Activated B cell treated with CpG ODN at 0.5 μM for 24 hours (primary cell): ENCODE measurements at regions of chr1 and their contacts with region 1.

Region 1: GRCh38 chr1:246931549-246932365 is at the start of gene AHCTF1:
- DNase-seq: peak; percentile 87
- ATAC-seq: peak; percentile 88
- H3K4me3 Mint-ChIP-seq: peak within 1 kb of the TSS; percentile 92
- H3K27ac Mint-ChIP-seq: peak within 1 kb of the TSS; percentile 96
- H3K4me1 Mint-ChIP-seq: peaks cover 29% of the 10 kb centered on the region
- H3K27me3 Mint-ChIP-seq: no peaks in the 10 kb centered on the region
- CTCF ChIP-seq: no peak
- total RNA-seq, gene AHCTF1: 25.3 and 31.3 TPM in 2 replicates

Region 2: DNA sequence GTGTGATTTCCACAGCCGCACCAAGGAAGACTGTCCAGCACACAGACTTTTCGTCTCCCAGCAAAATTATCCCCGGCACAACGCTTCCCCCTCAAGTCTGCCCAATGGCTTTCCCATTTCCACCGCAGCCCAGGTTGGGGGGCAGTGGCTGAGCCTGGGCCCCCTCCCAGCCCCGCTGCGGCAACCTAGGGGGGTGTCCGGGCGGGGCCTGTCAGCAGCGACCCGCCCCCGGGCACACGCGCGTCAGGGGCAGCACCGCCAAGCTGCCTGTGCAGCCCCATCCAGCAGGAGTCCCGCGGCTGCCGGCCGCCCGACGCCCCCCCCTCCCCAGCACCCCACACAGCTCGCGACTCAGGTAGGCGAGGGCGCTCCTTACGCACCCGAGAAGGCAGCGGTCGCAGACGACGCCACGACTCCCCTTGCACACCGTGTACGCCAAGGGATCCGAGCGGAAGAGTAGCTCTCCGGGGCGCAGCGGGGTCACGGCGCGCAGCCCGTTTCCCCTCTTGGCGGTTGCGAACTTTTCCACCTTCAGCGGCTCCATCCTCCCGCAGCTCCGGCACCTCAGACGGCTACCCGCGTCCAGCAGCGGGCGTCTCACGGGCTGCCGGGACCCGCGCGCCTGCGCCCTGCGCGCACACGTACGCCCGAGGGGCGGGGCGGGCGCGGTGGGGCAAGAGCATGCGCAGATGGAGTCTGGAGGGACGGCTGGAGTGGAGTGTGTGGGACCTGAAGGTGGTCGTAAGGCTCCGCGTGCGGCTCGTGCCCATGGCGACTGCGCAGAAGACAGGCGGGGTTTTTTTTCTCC is 424.9 kb before region 1 on chr1 and contains the start of gene SMYD3:
- CTCF ChIA-PET with region 1: no interaction called
- POLR2A ChIA-PET with region 1: no interaction called
- intact Hi-C with region 1: no loop called
- DNase-seq: peak; percentile 67
- ATAC-seq: peak; percentile 93
- H3K4me3 Mint-ChIP-seq: peak within 1 kb of the TSS; percentile 93
- H3K27ac Mint-ChIP-seq: peak within 1 kb of the TSS; percentile 86
- H3K4me1 Mint-ChIP-seq: peaks cover 22% of the 10 kb centered on the region
- H3K27me3 Mint-ChIP-seq: no peaks in the 10 kb centered on the region
- CTCF ChIP-seq: no peak
- total RNA-seq, gene SMYD3: 18.3 and 20.8 TPM in 2 replicates

Region 3: GRCh38 chr1:246617768-246618167 is 314.0 kb before region 1 on chr1:
- CTCF ChIA-PET with region 1: no interaction called
- POLR2A ChIA-PET with region 1: no interaction called
- intact Hi-C with region 1: no loop called
- DNase-seq: no peak
- ATAC-seq: no peak
- H3K4me3 Mint-ChIP-seq: no peak overlapping the region
- H3K27ac Mint-ChIP-seq: no peak overlapping the region
- H3K4me1 Mint-ChIP-seq: peaks cover 5% of the 10 kb centered on the region
- H3K27me3 Mint-ChIP-seq: no peaks in the 10 kb centered on the region
- CTCF ChIP-seq: no peak

Region 4: GRCh38 chr1:246959944-246960693 is 28.4 kb after region 1 on chr1:
- CTCF ChIA-PET with region 1: no interaction called
- POLR2A ChIA-PET with region 1: interaction called, 15 read pairs
- intact Hi-C with region 1: loop called (anchors 1 kb)
- DNase-seq: no peak
- ATAC-seq: peak; percentile 56
- H3K4me3 Mint-ChIP-seq: peak overlapping the region; percentile 50
- H3K27ac Mint-ChIP-seq: peak overlapping the region; percentile 62
- H3K4me1 Mint-ChIP-seq: peaks cover 36% of the 10 kb centered on the region
- H3K27me3 Mint-ChIP-seq: no peaks in the 10 kb centered on the region
- CTCF ChIP-seq: no peak

Region 5: GRCh38 chr1:247007511-247008405 is 76.0 kb after region 1 on chr1 and contains the start of gene ZNF695:
- CTCF ChIA-PET with region 1: no interaction called
- POLR2A ChIA-PET with region 1: interaction called, 3 read pairs
- intact Hi-C with region 1: loop called (anchors 1 kb)
- DNase-seq: peak; percentile 56
- ATAC-seq: peak; percentile 100
- H3K4me3 Mint-ChIP-seq: peak within 1 kb of the TSS; percentile 92
- H3K27ac Mint-ChIP-seq: peak within 1 kb of the TSS; percentile 18
- H3K4me1 Mint-ChIP-seq: peaks cover 10% of the 10 kb centered on the region
- H3K27me3 Mint-ChIP-seq: peaks cover 14% of the 10 kb centered on the region
- CTCF ChIP-seq: no peak
- total RNA-seq, gene ZNF695: 0.07 and 0.83 TPM in 2 replicates

Region 6: DNA sequence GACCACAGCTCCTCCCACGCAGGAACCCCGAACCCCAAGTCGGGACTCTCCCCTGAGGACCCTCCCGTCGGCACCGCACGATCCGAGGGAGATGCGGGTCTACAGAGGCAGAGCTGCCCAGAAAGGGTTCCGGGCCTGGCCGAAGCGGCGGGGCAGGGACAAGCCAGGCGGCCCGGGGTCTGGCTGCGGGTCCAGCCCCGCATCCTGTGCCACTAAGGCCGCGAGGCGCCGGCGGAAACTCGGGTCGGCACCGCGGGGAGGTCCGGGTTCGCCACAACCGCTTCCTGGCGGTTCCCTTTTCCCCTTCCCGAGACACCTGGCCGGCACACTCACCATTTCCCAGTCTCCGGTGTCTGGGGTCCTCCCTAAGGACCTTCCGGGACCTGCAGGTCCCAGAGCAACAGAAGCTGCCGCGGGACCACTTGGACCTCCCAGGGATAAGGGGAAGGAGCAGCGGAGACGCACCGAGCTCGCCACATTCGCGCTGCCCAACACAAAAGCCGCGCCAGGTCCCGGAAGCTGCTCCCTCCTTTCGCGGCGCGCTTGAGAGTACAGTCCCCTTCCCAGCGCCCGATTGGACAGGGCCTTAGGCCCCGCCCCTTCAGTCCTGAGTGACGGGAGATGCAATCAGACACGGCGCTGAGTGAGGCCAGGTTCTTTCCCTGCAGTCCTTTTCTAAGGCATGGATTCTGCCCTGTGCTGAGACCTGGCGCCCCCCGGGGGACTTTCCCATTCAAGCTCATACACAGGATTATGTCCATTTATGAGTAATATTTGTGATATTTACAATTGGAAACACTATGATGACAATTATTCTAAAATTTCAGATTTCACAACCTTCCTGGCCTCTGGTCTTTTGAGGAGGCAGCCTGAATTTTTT is 146.7 kb after region 1 on chr1 and contains the start of gene ZNF670:
- CTCF ChIA-PET with region 1: no interaction called
- POLR2A ChIA-PET with region 1: interaction called, 6 read pairs
- intact Hi-C with region 1: loop called (anchors 1 kb)
- DNase-seq: peak; percentile 78
- ATAC-seq: peak; percentile 98
- H3K4me3 Mint-ChIP-seq: peak within 1 kb of the TSS; percentile 95
- H3K27ac Mint-ChIP-seq: peak within 1 kb of the TSS; percentile 83
- H3K4me1 Mint-ChIP-seq: peaks cover 27% of the 10 kb centered on the region
- H3K27me3 Mint-ChIP-seq: peaks cover 4% of the 10 kb centered on the region
- CTCF ChIP-seq: no peak
- total RNA-seq, gene ZNF670: 6.1 and 6.2 TPM in 2 replicates

Region 7: DNA sequence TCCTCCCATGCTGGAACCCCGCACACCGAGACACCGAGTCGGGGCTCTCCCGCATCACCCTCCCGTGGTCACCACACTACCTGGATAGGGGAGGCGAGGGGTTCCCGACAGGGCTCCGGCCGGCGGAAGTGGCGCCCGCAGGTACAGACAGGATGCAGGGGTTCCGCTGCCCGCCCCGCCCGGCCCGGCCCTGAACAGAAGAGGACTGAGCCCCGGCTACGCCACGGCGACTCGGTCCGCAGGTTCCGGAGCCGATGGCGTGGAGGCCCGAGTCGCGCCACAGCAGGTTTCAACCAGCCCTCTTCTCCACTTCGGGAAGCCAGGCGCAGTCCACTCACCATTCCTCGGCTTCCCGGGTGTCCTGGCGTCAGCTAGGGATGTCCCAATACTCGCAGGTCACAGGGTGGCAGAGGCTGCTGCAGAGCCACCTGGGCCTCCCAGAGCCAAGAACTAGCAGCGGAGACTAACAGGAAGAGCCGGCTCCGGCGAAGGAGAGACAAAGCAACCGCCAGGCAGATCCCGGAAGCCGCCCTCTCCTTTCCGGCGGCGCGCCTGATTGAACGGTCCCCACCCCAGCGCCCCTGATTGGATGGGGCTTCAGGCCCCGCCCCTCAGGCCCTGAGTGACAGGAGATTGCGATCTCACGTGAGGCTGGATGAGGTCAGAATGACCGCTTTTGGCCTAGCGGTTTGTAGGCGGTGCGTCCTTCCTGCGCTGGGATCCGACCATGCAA is 172.3 kb after region 1 on chr1 and contains the start of gene ZNF669:
- CTCF ChIA-PET with region 1: no interaction called
- POLR2A ChIA-PET with region 1: no interaction called
- intact Hi-C with region 1: loop called (anchors 1 kb)
- DNase-seq: peak; percentile 89
- ATAC-seq: peak; percentile 98
- H3K4me3 Mint-ChIP-seq: peak within 1 kb of the TSS; percentile 96
- H3K27ac Mint-ChIP-seq: peak within 1 kb of the TSS; percentile 90
- H3K4me1 Mint-ChIP-seq: peaks cover 21% of the 10 kb centered on the region
- H3K27me3 Mint-ChIP-seq: peaks cover 23% of the 10 kb centered on the region
- CTCF ChIP-seq: no peak
- total RNA-seq, gene ZNF669: 17.5 and 18.0 TPM in 2 replicates

Region 8: GRCh38 chr1:247172996-247173395 is 241.2 kb after region 1 on chr1:
- CTCF ChIA-PET with region 1: no interaction called
- POLR2A ChIA-PET with region 1: no interaction called
- intact Hi-C with region 1: loop called (anchors 5 kb)
- DNase-seq: no peak
- ATAC-seq: no peak
- H3K4me3 Mint-ChIP-seq: no peak overlapping the region
- H3K27ac Mint-ChIP-seq: no peak overlapping the region
- H3K4me1 Mint-ChIP-seq: peaks cover 14% of the 10 kb centered on the region
- H3K27me3 Mint-ChIP-seq: no peaks in the 10 kb centered on the region
- CTCF ChIP-seq: no peak

Region 9: DNA sequence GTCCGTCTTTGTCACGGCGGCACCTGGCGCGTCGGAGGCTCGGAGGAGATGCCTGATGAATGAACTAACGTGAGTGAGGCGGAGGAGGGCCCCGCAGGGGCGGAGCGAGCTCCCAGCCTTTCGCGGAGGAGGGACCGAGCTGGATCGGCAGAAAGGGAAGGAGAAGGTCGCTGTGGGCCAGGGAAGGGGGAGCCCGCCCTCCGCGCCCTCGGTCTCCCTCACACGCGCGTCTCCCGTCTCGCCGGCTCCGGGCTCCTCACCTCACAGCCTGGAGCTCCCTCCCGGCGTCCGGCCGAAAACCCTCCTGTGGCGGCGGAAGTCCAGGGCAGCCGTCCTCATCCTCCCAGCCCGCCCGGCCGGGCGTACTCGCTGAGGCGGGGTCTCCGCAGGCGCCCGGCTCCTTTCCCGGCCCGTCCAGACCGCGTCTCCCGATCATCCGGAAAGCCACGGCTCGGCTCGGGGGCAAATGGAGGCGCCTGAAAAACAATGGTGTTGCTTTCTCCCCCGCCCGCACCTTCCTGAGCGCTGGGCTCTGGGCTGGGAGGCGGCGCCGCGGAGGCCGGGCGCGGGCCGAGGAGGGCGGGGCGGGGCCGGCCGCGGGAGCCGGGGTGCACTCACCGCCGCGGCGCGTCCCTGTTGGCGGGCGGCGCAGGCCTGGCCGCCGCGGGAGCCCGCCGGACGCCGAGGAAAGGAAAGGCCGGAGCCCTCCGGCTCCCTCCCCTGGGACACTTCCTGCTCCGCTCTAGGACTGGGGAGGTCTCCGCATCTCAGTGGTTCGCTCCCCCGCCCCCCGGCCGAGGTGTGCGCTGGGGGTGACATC is 399.6 kb after region 1 on chr1 and contains the start of gene ZNF496:
- CTCF ChIA-PET with region 1: no interaction called
- POLR2A ChIA-PET with region 1: no interaction called
- intact Hi-C with region 1: loop called (anchors 5 kb)
- DNase-seq: peak; percentile 59
- ATAC-seq: peak; percentile 73
- H3K4me3 Mint-ChIP-seq: peak within 1 kb of the TSS; percentile 89
- H3K27ac Mint-ChIP-seq: peak within 1 kb of the TSS; percentile 59
- H3K4me1 Mint-ChIP-seq: peaks cover 23% of the 10 kb centered on the region
- H3K27me3 Mint-ChIP-seq: no peaks in the 10 kb centered on the region
- CTCF ChIP-seq: no peak
- total RNA-seq, gene ZNF496: 15.0 and 21.2 TPM in 2 replicates